Right cardiac atrium (tissue), 5 donors: ENCODE measurements at regions of chr12 and their contacts with region 1.

Region 1: GRCh38 chr12:48851883-48852733 is at the start of gene DDX23:
- DNase-seq: peak; percentile 95 to 98 (median 97)
- ATAC-seq: peak; percentile 98 to 99
- H3K4me3 ChIP-seq: peak within 1 kb of the TSS; percentile 86
- H3K27ac ChIP-seq: peak within 1 kb of the TSS; percentile 93
- H3K4me1 ChIP-seq: no peaks in the 10 kb centered on the region
- H3K27me3 ChIP-seq: no peaks in the 10 kb centered on the region
- total RNA-seq, gene DDX23: 31.4 to 38.9 (median 35.1) TPM

Region 2: GRCh38 chr12:48890657-48891418 is 38.7 kb after region 1 on chr12:
- intact Hi-C with region 1: loop called (anchors 2 to 5 kb)
- DNase-seq: peak; percentile 77 to 94 (median 92)
- ATAC-seq: peak; percentile 98
- H3K4me3 ChIP-seq: peak overlapping the region; percentile 46
- H3K27ac ChIP-seq: no peak overlapping the region
- H3K4me1 ChIP-seq: no peaks in the 10 kb centered on the region
- H3K27me3 ChIP-seq: no peaks in the 10 kb centered on the region

Region 3: DNA sequence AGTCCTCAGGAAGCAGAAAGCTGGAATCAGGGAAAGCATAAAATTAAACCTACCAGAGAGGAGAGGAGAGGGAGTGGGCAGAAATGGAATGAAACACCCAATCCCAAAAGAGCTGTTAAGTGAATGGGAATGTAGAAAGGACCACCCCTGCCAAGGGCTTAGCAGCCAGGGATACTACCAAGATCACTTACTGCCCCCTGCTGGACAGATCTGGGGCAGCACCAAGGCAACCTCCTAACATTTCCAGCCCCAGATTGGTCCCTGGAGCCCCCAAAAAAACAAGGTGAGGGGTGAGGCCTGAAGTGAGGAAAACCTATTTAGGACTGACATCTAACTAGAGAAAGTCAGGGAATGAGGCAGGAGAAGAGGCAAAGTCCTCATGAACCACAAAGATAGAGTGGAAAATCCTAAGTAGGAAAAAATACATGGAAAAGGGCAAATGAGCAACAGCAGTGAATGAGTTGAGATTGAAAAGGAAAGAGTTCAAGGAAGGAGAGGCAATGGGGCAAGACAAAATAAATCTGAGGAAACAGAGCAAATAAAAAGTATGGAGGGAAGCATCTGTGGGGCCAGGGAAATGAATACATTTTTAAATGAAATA is 84.4 kb after region 1 on chr12:
- intact Hi-C with region 1: loop called in 2 of 4 experiments (anchors 2 to 5 kb)
- DNase-seq: peak; percentile 77 to 91 (median 83)
- ATAC-seq: peak; percentile 45 to 78
- H3K4me3 ChIP-seq: no peak overlapping the region
- H3K27ac ChIP-seq: no peak overlapping the region
- H3K4me1 ChIP-seq: no peaks in the 10 kb centered on the region
- H3K27me3 ChIP-seq: no peaks in the 10 kb centered on the region

Region 4: DNA sequence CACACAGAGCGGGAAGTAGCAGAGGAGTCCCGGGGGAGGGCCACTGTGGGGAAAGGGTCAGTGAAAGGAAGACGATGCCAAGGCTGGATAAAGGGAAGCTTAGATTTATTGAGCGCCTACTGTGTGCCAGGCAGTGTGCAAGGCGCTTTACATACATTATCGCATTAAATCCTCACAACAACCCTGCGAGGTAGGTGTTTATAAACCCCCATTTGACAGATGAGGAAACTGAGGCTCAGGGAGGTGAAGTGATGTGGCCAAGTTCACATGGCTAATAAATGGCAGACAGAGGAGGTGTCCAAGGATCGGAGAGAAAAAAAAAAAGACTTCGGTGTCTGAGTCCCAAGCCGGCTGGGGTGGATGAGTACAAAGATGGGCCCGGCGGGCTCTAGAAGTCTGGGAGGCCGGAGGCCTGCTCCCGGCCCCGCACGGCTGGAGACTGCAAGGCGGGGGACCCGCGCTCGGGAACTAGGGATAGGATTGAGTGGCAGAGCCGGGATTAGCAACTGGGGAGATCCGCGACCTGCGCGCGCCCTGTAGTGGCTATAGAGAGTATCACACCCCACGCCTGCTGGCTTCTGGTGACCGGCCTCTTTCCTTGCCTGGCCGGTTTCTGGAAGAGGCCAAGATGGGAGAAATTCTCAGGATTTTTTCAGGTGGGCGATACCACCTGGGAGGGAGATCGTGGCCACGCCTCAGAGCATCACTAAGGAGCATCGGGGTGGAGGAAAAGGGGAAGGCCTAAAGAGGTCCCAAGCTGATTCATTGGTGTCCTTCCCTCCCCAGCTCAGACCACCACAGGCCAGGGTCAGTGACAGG is 143.2 kb after region 1 on chr12:
- intact Hi-C with region 1: loop called in 1 of 4 experiments (anchors 5 kb)
- DNase-seq: peak; percentile 82 to 93 (median 91)
- ATAC-seq: peak; percentile 73 to 74
- H3K4me3 ChIP-seq: peak overlapping the region; percentile 17
- H3K27ac ChIP-seq: no peak overlapping the region
- H3K4me1 ChIP-seq: peaks cover 7% of the 10 kb centered on the region
- H3K27me3 ChIP-seq: no peaks in the 10 kb centered on the region